ENCODE measurements at regions of chr2 and their contacts with region 1.

Region 1: GRCh38 chr2:222064286-222064685 is 234.5 kb downstream of the PAX3 start:
- DNase-seq: no peak
- H3K4me3 Mint-ChIP-seq: no peak overlapping the region
- H3K27ac Mint-ChIP-seq: no peak overlapping the region
- H3K4me1 Mint-ChIP-seq: no peaks in the 10 kb centered on the region
- H3K27me3 Mint-ChIP-seq: peaks cover 62% of the 10 kb centered on the region
- CTCF ChIP-seq: no peak

Region 2: DNA sequence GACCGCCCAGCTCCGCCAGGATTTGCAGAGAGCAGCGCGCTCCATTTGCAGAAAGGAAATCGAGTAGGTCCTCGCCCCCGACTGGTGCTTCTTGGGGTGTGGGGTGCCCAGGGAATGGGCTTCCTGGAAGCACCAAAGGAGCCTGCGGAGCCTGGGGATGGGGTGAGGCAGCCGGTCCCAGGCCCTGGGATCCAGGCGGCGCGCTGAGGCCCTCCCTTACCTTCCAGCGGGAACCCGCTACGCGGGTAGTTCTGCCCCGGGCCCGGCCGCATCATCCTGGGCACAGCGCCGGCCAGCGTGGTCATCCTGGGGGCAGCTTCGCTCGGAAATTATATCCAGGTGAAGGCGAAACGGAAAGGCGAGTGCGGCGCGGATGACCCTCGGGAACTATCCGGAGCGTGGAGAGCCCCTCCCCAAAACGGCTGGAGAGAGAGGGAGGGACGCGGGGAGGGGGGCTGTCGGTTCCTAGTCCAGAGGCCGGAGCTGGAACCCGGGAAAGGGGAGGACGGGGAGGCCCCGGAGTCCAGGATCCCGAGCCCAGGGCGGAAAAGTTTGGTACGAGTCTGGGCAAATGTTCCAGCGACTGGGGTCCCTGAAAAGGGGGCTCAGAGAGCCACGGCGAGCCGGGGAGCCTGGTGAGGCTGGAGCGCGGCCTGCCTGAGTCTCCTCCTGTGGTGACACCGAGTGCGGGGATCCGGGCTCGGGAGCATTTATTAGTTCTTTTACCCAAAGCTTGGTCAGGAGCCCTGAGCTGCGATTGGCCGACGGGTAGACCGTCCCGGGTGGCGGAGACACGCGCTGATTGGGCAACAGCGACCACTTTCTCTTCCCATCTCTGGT is 234.2 kb after region 1 on chr2 and contains the start of gene PAX3:
- CTCF ChIA-PET with region 1: no interaction called
- POLR2A ChIA-PET with region 1: no interaction called
- intact Hi-C with region 1: loop called (anchors 5 kb)
- DNase-seq: no peak
- H3K4me3 Mint-ChIP-seq: no peak within 1 kb of the TSS
- H3K27ac Mint-ChIP-seq: no peak within 1 kb of the TSS
- H3K4me1 Mint-ChIP-seq: peaks cover 7% of the 10 kb centered on the region
- H3K27me3 Mint-ChIP-seq: peaks cover 100% of the 10 kb centered on the region
- CTCF ChIP-seq: no peak
- total RNA-seq, gene PAX3: not detected in 2 replicates

Measured in MCF 10A (cell line).